ENCODE measurements at regions of chr5 and their contacts with region 1.

Region 1: DNA sequence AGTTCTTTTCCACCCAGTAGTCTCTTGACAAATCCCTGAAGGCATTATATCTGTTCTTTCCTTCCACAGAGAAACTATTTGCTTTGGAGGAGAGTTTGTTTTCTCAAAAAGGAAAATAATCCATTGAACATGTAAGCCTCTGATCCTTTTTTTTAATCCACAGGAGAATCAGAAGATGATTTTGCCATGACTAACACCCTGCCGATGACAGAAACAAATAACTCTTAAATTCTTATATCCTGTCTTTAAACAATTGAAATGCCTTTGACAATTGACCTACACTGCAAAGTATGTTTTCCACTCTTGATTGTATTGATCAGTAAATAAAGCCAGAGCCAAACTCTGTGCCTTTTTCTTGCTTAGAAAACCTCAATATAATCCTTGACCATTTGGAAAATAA is 666.4 kb upstream of the CTNND2 start:
- DNase-seq: no peak
- ATAC-seq: no peak
- H3K4me3 ChIP-seq: no peak overlapping the region
- H3K27ac ChIP-seq: no peak overlapping the region
- H3K4me1 ChIP-seq: no peaks in the 10 kb centered on the region; a peak in 1 of 5 replicates
- H3K27me3 ChIP-seq: no peaks in the 10 kb centered on the region
- CTCF ChIP-seq: no peak
- EP300 ChIP-seq: no peak
- POLR2A ChIP-seq: no peak
- RAD21 ChIP-seq: no peak

Region 2: GRCh38 chr5:12467799-12468198 is 102.9 kb before region 1 on chr5:
- CTCF ChIA-PET with region 1: no interaction called
- POLR2A ChIA-PET with region 1: no interaction called
- in situ Hi-C with region 1: no loop called
- intact Hi-C with region 1: no loop called
- DNase-seq: no peak
- ATAC-seq: no peak
- H3K4me3 ChIP-seq: no peak overlapping the region
- H3K27ac ChIP-seq: no peak overlapping the region
- H3K4me1 ChIP-seq: no peaks in the 10 kb centered on the region
- H3K27me3 ChIP-seq: no peaks in the 10 kb centered on the region
- CTCF ChIP-seq: no peak
- EP300 ChIP-seq: no peak
- POLR2A ChIP-seq: no peak
- RAD21 ChIP-seq: no peak

Region 3: DNA sequence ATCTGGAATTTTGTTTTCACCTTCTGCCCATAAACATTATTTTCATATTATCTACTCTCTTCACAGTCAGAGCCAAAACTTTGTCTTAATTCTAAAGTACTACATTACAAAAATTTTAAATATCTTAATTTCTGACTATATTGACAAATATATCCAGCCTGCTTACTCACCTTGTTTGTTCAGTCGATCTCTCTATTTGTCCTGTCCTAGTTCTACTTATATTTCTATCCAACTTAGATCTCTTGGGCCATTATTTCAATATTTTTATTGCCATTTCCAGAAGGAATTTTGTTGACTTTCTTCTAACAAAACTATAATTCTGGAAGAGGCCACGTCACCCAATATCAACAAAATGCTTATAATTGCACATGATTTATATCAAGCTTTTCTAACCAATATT is 13.7 kb before region 1 on chr5:
- CTCF ChIA-PET with region 1: no interaction called
- POLR2A ChIA-PET with region 1: no interaction called
- in situ Hi-C with region 1: no loop called
- intact Hi-C with region 1: no loop called
- DNase-seq: no peak
- ATAC-seq: no peak
- H3K4me3 ChIP-seq: no peak overlapping the region
- H3K27ac ChIP-seq: no peak overlapping the region
- H3K4me1 ChIP-seq: no peaks in the 10 kb centered on the region
- H3K27me3 ChIP-seq: no peaks in the 10 kb centered on the region
- CTCF ChIP-seq: no peak
- EP300 ChIP-seq: no peak
- POLR2A ChIP-seq: no peak
- RAD21 ChIP-seq: no peak

Region 4: DNA sequence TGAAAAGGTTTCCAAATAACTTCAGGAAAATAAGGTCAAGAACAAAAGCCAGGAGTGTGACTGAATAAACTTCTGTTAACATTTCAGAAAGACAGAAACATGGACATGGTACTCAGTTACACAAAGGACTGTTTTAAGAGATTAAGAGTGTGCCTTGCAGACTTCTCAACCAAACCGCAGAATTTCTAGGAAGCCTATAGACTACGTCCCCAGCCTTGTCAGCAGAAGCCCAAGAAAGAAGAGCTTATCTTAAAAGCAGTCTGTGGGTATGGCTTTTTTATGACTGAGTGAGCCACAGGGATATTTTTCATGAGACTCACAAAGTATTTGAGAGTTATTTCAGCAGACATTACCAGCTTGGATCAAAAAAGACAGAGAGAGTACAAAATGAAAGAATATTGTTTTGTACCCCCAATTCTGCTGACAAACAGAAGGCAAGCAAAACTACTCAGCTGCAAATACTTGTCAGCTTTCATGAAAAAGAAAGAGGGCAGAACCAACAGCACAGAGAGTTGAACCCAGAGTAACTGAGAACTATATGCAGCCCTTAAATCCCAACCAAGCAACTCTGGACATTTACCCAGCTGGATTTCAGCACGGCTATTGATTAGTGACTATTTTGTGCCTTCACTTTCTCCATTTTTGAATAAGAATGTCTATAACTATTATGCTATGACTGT is 44.6 kb after region 1 on chr5:
- CTCF ChIA-PET with region 1: no interaction called
- POLR2A ChIA-PET with region 1: no interaction called
- in situ Hi-C with region 1: no loop called
- intact Hi-C with region 1: loop called (anchors 1 kb)
- DNase-seq: peak; percentile 59 to 93 (median 72)
- ATAC-seq: peak; percentile 91
- H3K4me3 ChIP-seq: no peak overlapping the region; the same call in 1 of the 2 replicates
- H3K27ac ChIP-seq: peak overlapping the region; percentile 83
- H3K4me1 ChIP-seq: peaks cover 13 to 43% of the 10 kb centered on the region in 2 experiments
- H3K27me3 ChIP-seq: no peaks in the 10 kb centered on the region
- CTCF ChIP-seq: no peak
- EP300 ChIP-seq: peak; percentile 93
- POLR2A ChIP-seq: no peak
- RAD21 ChIP-seq: peak in 1 of 2 experiments; percentile 25; a peak in 1 of 4 replicates

Measured in K562 (cell line).